H1 (cell line): ENCODE measurements at regions of chr11 and their contacts with region 1.

Region 1: GRCh38 chr11:63945477-63946163 is 6.8 kb downstream of the NAA40 start:
- DNase-seq: peak; percentile 27 to 72
- H3K4me3 ChIP-seq: no peak overlapping the region
- H3K27ac ChIP-seq: no peak overlapping the region
- H3K4me1 ChIP-seq: no peaks in the 10 kb centered on the region; a peak in 1 of 7 replicates
- H3K27me3 ChIP-seq: no peaks in the 10 kb centered on the region
- CTCF ChIP-seq: peak; percentile 55 to 72 (median 72)
- EP300 ChIP-seq: no peak
- POLR2A ChIP-seq: no peak
- RAD21 ChIP-seq: peak; percentile 73 to 77

Region 2: GRCh38 chr11:63933459-63933858 is 12.2 kb before region 1 on chr11:
- CTCF ChIA-PET with region 1: interaction called, 39 read pairs
- POLR2A ChIA-PET with region 1: interaction called, 3 read pairs
- DNase-seq: no peak
- H3K4me3 ChIP-seq: no peak overlapping the region
- H3K27ac ChIP-seq: no peak overlapping the region
- H3K4me1 ChIP-seq: peaks cover 0 to 4% (median 0%) of the 10 kb centered on the region in 4 experiments; a peak in 1 of 7 replicates
- H3K27me3 ChIP-seq: peaks cover 0 to 3% (median 2%) of the 10 kb centered on the region in 4 experiments; a peak in 3 of 7 replicates
- CTCF ChIP-seq: no peak
- EP300 ChIP-seq: no peak
- POLR2A ChIP-seq: no peak
- RAD21 ChIP-seq: no peak

Region 3: GRCh38 chr11:63961608-63962412 is 16.2 kb after region 1 on chr11:
- CTCF ChIA-PET with region 1: interaction called, 12 read pairs
- POLR2A ChIA-PET with region 1: interaction called, 31 read pairs
- DNase-seq: no peak
- H3K4me3 ChIP-seq: no peak overlapping the region
- H3K27ac ChIP-seq: no peak overlapping the region
- H3K4me1 ChIP-seq: no peaks in the 10 kb centered on the region; a peak in 1 of 7 replicates
- H3K27me3 ChIP-seq: peaks cover 0 to 10% (median 0%) of the 10 kb centered on the region in 4 experiments; a peak in 2 of 7 replicates
- CTCF ChIP-seq: no peak
- EP300 ChIP-seq: no peak
- POLR2A ChIP-seq: no peak
- RAD21 ChIP-seq: no peak